ENCODE measurements at regions of chr11 and their contacts with region 1.

Region 1: DNA sequence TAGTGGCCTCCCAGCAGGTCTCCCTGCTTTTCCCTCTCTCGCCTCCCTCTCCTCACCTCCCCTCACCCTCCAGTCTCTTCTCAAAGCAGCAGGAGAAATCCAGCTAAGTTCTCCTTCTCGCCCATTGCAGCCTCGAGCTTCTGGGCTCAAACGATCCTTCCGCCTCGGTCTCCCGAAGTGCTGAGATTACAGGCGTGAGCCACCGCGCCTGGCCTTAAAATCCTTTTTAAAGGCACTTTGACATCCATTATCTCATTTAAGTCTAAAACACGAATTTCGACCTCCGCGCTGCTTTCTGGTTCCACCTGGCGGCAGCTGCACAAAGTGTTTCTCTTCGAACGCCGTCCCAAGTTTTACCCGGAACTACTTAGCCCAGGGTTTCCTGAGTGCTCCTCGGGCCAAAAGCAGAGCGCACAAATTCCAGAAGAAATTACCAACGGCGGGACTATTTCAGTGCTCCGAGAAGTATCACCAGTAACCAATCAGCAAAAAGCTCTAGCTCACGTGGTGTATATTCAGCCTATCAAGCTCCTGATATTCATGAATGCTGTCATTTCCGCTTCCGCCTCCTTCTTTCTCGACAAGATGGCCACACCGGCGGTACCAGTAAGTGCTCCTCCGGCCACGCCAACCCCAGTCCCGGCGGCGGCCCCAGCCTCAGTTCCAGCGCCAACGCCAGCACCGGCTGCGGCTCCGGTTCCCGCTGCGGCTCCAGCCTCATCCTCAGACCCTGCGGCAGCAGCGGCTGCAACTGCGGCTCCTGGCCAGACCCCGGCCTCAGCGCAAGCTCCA is at the start of gene EIF3F:
- DNase-seq: peak; percentile 99
- H3K4me3 ChIP-seq: peak within 1 kb of the TSS; percentile 80 to 89
- H3K27ac ChIP-seq: peak within 1 kb of the TSS; percentile 75 to 79
- H3K4me1 ChIP-seq: peaks cover 20% of the 10 kb centered on the region
- H3K27me3 ChIP-seq: no peaks in the 10 kb centered on the region
- CTCF ChIP-seq: peak; percentile 88 to 97 (median 91)
- POLR2A ChIP-seq: no peak
- total RNA-seq, gene EIF3F: 287 to 387 TPM

Region 2: DNA sequence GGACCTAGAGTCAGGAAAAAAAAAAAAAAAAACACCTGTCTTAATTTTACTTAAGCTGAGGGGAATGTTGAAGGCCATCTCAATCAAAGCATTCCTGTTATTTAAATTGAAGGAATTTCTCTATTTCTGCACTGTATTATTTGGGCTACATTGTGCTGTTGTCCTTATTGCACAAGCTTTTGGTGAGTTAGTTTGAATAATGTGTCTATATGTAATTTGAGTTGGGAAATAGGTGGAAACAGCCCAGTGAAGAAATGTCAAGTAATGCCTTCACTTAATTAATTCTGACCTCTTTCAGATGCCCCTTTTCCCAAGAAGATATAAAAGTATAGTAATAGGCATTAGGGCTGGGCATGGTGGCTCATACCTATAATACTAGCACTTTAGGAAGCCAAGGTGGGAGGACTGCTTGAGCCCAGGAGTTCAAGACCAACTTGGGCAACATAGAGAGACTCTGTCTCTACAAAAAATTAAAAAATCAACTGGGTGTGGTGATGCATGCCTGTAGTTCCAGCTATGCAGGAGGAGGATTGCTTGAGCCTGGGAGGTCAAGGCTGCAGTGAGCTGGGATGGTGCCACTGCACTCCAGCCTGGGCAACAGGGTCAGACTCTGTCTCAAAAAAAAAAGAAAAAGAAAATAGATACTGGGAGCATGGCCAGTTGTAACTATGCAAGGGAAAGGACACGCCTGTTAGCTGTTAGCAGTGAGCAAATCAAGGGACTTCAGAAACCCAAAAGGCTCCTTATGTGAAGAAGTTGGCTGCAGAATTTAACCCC is 90.8 kb before region 1 on chr11:
- intact Hi-C with region 1: loop called (anchors 5 kb)
- DNase-seq: peak; percentile 61
- H3K4me3 ChIP-seq: no peak overlapping the region
- H3K27ac ChIP-seq: peak overlapping the region in 1 of 2 donors; percentile 18
- H3K4me1 ChIP-seq: peaks cover 41% of the 10 kb centered on the region
- H3K27me3 ChIP-seq: no peaks in the 10 kb centered on the region
- CTCF ChIP-seq: no peak
- POLR2A ChIP-seq: no peak

Region 3: DNA sequence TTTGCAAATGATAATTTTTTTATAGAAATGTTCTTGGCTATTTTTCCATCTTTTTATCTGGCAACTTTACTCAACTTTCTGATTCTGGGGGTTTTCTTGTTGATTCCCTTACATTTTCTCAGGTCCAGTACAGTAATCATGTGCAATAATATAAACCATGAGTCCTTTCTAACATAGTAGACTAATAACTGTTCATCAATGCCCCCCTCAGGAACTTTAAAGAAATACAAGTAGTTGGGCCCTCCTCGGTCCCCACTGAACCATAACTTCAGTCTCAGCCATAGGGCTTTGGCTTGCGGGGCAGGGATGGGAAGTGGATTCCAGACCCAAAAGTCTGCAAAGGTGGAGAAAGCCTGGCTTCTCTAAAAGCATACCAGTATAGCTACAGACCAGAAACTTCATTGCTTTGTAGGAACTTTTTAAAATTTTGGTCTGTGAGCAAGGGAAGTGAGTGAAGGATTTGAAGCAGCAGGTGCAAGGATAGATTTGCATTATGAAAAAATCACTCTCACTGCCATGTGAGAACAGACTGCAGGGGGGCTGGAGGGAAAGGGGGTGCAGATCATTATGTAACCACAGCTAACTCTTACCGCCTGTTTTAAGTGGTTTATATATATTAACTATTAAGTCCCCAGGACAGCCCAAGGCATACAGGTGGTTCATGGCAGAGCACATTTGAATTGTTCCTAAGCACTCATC is 83.6 kb after region 1 on chr11:
- intact Hi-C with region 1: no loop called
- DNase-seq: no peak
- H3K4me3 ChIP-seq: no peak overlapping the region
- H3K27ac ChIP-seq: no peak overlapping the region
- H3K4me1 ChIP-seq: peaks cover 20% of the 10 kb centered on the region
- H3K27me3 ChIP-seq: no peaks in the 10 kb centered on the region
- CTCF ChIP-seq: peak; percentile 38 to 57 (median 43)
- POLR2A ChIP-seq: no peak

Region 4: DNA sequence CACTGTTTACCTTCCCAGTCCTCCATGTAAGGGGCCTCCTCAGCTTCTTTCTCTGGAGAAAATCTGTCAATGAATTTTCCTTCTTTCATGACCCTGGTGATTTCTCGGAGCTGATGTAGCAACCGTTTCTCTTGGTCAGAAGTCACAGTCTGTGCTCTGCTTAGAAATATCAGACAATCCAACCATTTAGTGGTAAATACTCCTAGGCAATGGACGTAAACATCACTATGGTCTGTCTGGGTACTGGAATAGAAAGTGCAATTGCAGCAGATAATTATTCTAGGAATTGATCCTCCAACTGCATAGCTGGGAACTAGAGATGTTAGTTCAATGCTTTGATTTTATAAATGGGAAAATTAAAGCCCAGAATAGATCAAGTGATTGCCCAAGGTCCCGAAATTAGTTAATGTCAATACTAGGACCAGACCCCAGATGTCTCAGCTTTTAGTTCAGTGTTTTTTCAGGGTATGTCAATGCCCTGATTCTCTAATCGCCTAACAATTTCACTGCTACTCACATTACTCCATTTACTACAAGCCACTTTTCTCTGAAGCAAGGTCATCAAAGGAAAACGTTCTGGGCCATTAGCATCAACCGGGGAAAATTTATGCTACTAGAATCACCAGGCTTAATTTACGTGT is 139.8 kb after region 1 on chr11:
- intact Hi-C with region 1: no loop called
- DNase-seq: no peak
- H3K4me3 ChIP-seq: no peak overlapping the region
- H3K27ac ChIP-seq: no peak overlapping the region
- H3K4me1 ChIP-seq: no peaks in the 10 kb centered on the region
- H3K27me3 ChIP-seq: no peaks in the 10 kb centered on the region
- CTCF ChIP-seq: no peak
- POLR2A ChIP-seq: no peak

Region 5: GRCh38 chr11:8233691-8234424 is 246.9 kb after region 1 on chr11:
- intact Hi-C with region 1: no loop called
- DNase-seq: no peak
- H3K4me3 ChIP-seq: no peak overlapping the region
- H3K27ac ChIP-seq: no peak overlapping the region
- H3K4me1 ChIP-seq: peaks cover 2% of the 10 kb centered on the region
- H3K27me3 ChIP-seq: no peaks in the 10 kb centered on the region
- CTCF ChIP-seq: no peak
- POLR2A ChIP-seq: no peak